Endothelial cell of umbilical vein (primary cell): ENCODE measurements at regions of chr6 and their contacts with region 1.

Region 1: GRCh38 chr6:49453221-49453620 is 9.8 kb downstream of the MMUT start:
- DNase-seq: peak; percentile 8
- H3K4me3 ChIP-seq: no peak overlapping the region
- H3K27ac ChIP-seq: no peak overlapping the region
- H3K4me1 ChIP-seq: no peaks in the 10 kb centered on the region
- H3K27me3 ChIP-seq: no peaks in the 10 kb centered on the region
- CTCF ChIP-seq: peak in 1 of 2 donors; percentile 12
- POLR2A ChIP-seq: no peak

Region 2: GRCh38 chr6:47817749-47818148 is 1635.5 kb before region 1 on chr6:
- CTCF ChIA-PET with region 1: no interaction called
- POLR2A ChIA-PET with region 1: no interaction called
- dilution Hi-C with region 1: no loop called
- intact Hi-C with region 1: no loop called
- DNase-seq: no peak
- H3K4me3 ChIP-seq: no peak overlapping the region
- H3K27ac ChIP-seq: no peak overlapping the region
- H3K4me1 ChIP-seq: no peaks in the 10 kb centered on the region
- H3K27me3 ChIP-seq: no peaks in the 10 kb centered on the region
- CTCF ChIP-seq: no peak
- POLR2A ChIP-seq: no peak

Region 3: DNA sequence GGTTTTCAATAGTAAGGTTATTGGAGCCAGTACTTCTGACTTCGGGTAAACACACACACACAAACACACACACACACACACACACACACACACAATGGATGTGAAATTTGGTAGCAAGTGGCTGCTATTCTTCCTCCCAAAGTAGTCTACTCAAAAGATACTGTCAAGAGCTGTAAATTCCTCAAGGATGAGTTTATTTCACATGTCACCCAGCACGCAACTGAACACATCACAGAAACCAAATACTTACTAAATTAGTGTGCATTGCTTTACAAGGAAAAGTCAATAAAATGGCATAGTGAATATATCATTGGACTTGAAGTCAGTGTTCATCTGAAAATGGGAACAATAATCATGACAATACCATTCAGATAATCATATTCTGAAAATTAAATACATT is 23.0 kb before region 1 on chr6:
- CTCF ChIA-PET with region 1: interaction called, 10 read pairs
- POLR2A ChIA-PET with region 1: no interaction called
- dilution Hi-C with region 1: no loop called
- intact Hi-C with region 1: no loop called
- DNase-seq: no peak
- H3K4me3 ChIP-seq: no peak overlapping the region
- H3K27ac ChIP-seq: no peak overlapping the region
- H3K4me1 ChIP-seq: peaks cover 2% of the 10 kb centered on the region
- H3K27me3 ChIP-seq: no peaks in the 10 kb centered on the region
- CTCF ChIP-seq: no peak
- POLR2A ChIP-seq: no peak

Region 4: DNA sequence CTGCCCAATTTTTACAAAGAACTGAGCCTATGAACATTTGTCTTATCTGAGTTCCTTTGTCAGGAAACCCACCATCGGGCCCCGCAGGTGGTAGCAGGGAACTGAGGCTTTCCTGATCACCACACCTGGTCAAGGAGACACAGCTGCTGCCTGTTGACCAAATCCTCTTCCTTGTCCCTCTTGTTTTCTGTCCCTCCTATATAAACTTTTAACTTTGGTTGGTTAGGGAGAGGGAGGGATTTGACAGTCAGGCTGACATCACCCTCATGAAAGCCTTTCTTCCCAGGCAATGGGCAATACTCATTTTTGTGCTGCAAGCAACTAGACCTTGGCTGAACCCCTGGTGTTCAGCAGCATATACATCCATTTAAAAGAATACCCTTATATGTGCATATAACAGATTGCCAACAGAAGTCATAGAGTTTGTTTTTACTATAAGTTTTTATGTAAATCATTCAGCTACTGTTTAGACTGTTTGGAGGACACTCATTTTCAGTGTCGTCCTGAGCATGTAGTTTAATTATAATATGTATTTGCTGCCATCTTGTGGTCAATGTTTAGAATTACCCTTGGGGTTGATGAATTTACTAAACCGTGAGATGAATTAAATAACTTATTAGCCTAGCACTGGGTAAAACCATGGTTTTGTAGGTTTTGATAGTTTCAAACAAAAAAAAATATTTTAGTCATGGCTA is 396.1 kb after region 1 on chr6:
- CTCF ChIA-PET with region 1: interaction called, 15 read pairs
- POLR2A ChIA-PET with region 1: no interaction called
- dilution Hi-C with region 1: no loop called
- intact Hi-C with region 1: loop called (anchors 1 kb)
- DNase-seq: peak; percentile 47
- H3K4me3 ChIP-seq: no peak overlapping the region
- H3K27ac ChIP-seq: no peak overlapping the region
- H3K4me1 ChIP-seq: no peaks in the 10 kb centered on the region
- H3K27me3 ChIP-seq: no peaks in the 10 kb centered on the region
- CTCF ChIP-seq: peak; percentile 9 to 19
- POLR2A ChIP-seq: no peak